Activated CD8-positive, alpha-beta T cell treated with anti-CD3 and anti-CD28 coated beads for 36 hours (primary cell): ENCODE measurements at regions of chr15 and their contacts with region 1.

Region 1: DNA sequence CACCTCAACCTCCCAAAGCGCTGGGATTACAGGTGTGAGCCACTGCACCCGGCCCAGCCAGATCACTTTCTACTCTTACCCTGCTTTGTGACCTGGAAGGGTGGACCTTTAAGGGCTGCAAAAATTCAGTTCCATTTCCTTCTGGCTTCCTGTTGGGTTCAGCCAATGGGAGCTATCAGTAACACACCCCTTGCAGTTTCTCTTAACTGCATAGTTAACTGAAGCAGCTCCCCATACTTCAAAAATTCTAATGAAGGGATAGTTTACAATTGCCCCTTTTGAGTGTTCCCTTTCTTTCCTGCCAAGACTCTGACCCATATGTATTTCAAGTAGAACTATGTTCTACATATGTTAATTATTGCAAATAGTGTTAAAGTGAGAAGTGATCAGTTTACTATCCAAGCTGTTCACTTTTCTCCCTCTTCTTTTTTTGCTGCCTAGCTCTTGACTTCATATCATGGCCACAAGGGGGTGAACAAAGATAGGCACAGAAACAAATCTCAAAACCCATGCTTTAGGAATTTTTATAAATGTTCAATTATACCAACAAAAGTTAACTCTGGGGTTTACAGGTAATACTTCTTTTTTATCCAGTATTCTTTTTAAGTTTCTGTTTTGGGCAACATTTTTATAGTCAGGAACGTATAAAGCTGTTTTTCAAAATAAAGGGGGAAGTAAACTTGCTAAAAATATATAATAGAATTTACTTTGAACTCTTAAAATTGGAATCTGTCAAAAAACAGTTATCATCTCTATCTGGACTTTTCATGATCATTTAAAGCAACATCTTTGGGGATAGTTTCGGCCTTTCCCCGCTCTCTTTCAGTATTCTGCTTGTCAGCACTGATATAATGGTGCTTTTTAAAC is 8.1 kb downstream of the PGBD4 start:
- DNase-seq: peak; percentile 15
- ATAC-seq: no peak
- H3K4me3 Mint-ChIP-seq: no peak overlapping the region
- H3K27ac Mint-ChIP-seq: no peak overlapping the region
- H3K4me1 Mint-ChIP-seq: no peaks in the 10 kb centered on the region
- H3K27me3 Mint-ChIP-seq: no peaks in the 10 kb centered on the region
- CTCF ChIP-seq: peak; percentile 71

Region 2: GRCh38 chr15:34049112-34049511 is 60.9 kb before region 1 on chr15:
- CTCF ChIA-PET with region 1: no interaction called
- POLR2A ChIA-PET with region 1: no interaction called
- intact Hi-C with region 1: no loop called
- DNase-seq: no peak
- ATAC-seq: no peak
- H3K4me3 Mint-ChIP-seq: no peak overlapping the region
- H3K27ac Mint-ChIP-seq: no peak overlapping the region
- H3K4me1 Mint-ChIP-seq: no peaks in the 10 kb centered on the region
- H3K27me3 Mint-ChIP-seq: no peaks in the 10 kb centered on the region
- CTCF ChIP-seq: no peak

Region 3: DNA sequence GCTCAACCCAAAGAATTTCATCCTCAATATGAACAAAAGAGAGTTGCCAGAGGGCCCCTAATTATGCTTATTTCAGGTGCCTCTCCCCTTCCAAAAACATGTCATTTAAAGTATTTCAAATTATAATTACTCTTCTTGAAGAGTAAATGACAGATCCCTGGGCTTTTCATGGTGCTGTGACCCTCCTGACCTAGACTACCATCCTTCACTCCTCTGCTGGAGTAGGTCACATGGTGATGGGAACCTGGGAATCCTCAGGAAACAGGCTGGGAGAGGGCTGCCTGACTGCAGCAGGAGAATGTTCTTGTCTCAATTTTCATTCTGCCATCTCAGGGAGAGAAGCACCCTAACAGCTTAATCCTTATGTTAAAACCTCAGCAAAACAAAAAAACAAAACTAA is 16.5 kb after region 1 on chr15:
- CTCF ChIA-PET with region 1: interaction called, 15 read pairs
- POLR2A ChIA-PET with region 1: no interaction called
- intact Hi-C with region 1: no loop called
- DNase-seq: no peak
- ATAC-seq: no peak
- H3K4me3 Mint-ChIP-seq: no peak overlapping the region
- H3K27ac Mint-ChIP-seq: no peak overlapping the region
- H3K4me1 Mint-ChIP-seq: no peaks in the 10 kb centered on the region
- H3K27me3 Mint-ChIP-seq: peaks cover 5% of the 10 kb centered on the region
- CTCF ChIP-seq: no peak

Region 4: GRCh38 chr15:34217587-34218225 is 107.7 kb after region 1 on chr15:
- CTCF ChIA-PET with region 1: interaction called, 69 read pairs
- POLR2A ChIA-PET with region 1: no interaction called
- intact Hi-C with region 1: no loop called
- DNase-seq: no peak
- ATAC-seq: no peak
- H3K4me3 Mint-ChIP-seq: no peak overlapping the region
- H3K27ac Mint-ChIP-seq: no peak overlapping the region
- H3K4me1 Mint-ChIP-seq: peaks cover 2% of the 10 kb centered on the region
- H3K27me3 Mint-ChIP-seq: no peaks in the 10 kb centered on the region
- CTCF ChIP-seq: no peak

Region 5: DNA sequence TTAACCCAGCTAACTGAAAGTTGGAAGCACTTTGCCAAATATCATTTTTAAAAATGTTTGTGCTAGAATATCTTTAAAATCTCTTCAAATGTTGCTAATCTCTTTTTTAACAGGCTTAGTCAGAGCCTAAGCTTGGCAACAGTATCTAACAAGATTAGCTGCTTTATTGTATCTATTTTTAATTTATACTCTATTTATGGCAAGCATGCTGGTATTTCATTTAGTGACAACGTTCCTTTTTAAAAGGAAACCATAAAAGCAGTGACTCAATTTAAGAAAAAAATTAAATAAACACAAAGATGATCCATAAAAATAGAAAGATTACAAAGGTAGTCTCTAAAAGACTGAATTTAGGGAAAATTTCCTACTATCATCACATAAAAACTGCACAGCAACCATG is 187.0 kb after region 1 on chr15:
- CTCF ChIA-PET with region 1: no interaction called
- POLR2A ChIA-PET with region 1: no interaction called
- intact Hi-C with region 1: no loop called
- DNase-seq: no peak
- ATAC-seq: no peak
- H3K4me3 Mint-ChIP-seq: no peak overlapping the region
- H3K27ac Mint-ChIP-seq: peak overlapping the region; percentile 12
- H3K4me1 Mint-ChIP-seq: peaks cover 34% of the 10 kb centered on the region
- H3K27me3 Mint-ChIP-seq: no peaks in the 10 kb centered on the region
- CTCF ChIP-seq: no peak